Activated naive CD4-positive, alpha-beta T cell treated with anti-CD3 and anti-CD28 coated beads for 36 hours (primary cell): ENCODE measurements at regions of chr19 and their contacts with region 1.

Region 1: GRCh38 chr19:48637170-48637947 is at the start of gene DBP:
- DNase-seq: peak; percentile 98
- H3K4me3 Mint-ChIP-seq: peak within 1 kb of the TSS; percentile 82
- H3K27ac Mint-ChIP-seq: peak within 1 kb of the TSS; percentile 98
- H3K4me1 Mint-ChIP-seq: peaks cover 54% of the 10 kb centered on the region
- H3K27me3 Mint-ChIP-seq: no peaks in the 10 kb centered on the region
- total RNA-seq, gene DBP: 7.8 to 9.7 TPM

Region 2: GRCh38 chr19:48398375-48399235 is 238.8 kb before region 1 on chr19:
- CTCF ChIA-PET with region 1: no interaction called
- intact Hi-C with region 1: loop called (anchors 1 kb)
- DNase-seq: peak; percentile 86
- H3K4me3 Mint-ChIP-seq: peak overlapping the region; percentile 48
- H3K27ac Mint-ChIP-seq: no peak overlapping the region
- H3K4me1 Mint-ChIP-seq: peaks cover 41% of the 10 kb centered on the region
- H3K27me3 Mint-ChIP-seq: peaks cover 41% of the 10 kb centered on the region

Region 3: DNA sequence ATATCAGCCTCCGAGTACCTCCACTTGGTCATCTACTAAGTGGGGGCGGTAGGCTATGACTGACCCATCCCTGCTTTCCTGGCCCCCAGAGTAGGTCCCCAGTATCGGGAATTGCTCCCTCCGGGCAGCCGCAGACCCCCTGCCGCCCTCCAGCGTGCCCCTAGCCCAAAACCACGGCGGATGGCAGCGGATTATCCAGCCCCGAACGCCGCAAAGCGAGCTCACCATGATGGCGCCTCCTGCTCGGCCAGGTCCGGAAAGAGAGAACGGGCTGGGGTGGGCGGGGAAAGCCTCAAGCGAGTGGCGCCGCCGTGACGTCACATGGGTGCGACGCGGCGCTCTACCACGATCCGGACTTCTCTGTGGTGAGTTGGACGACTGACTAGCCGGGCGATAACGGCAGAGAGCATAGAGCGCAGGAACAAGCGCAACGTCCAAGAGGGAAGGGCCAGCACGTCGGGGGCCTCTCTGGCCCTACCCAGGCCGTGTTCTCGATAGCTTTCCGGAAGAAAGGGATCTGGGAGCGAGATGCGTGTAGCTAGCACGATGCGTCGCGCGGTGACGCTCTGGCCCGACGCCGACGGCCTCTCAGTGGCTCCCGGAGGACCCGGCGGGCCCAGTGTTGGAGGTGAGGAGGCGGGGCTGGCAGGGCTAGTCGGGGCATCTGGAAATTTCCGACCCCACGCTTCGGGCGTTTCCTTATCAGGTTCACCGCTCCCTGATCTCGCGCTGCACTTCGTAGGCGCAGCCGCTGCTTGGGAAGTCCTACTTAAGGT is 18.3 kb before region 1 on chr19 and contains the starts of genes RPL18 and SPHK2:
- CTCF ChIA-PET with region 1: no interaction called
- intact Hi-C with region 1: loop called (anchors 1 kb)
- DNase-seq: peak; percentile 95
- H3K4me3 Mint-ChIP-seq: peak within 1 kb of the TSS; percentile 99
- H3K27ac Mint-ChIP-seq: peak within 1 kb of the TSS; percentile 99
- H3K4me1 Mint-ChIP-seq: peaks cover 53% of the 10 kb centered on the region
- H3K27me3 Mint-ChIP-seq: no peaks in the 10 kb centered on the region
- total RNA-seq, gene RPL18: 2,373 to 2,473 TPM
- total RNA-seq, gene SPHK2: 20.1 to 20.6 TPM

Region 4: DNA sequence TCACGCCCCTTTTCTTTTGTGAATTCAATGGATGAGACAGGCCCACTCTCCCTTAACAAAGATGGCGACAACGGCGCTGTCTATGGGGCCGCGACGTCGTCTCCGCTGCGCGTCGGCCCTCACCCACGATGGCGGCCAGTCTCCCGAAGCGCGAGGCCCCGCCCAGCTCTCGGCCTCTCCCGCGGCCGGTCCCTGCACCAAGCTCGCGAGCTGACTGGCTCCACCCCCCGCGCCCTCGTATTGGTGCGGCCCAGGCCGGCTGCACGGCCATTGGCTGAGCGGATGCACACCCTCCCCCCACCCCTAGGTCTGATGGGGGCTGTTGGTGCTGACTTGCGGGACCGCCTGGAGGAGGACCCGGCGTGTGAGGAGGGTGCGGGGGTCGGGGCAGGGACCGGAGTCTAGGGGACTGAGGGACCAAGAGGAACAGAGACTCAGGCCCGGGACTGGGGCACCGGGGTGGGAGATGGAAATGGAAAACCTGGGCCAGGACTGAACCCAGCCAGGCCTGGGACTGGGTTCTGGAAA is 13.2 kb before region 1 on chr19:
- CTCF ChIA-PET with region 1: no interaction called
- intact Hi-C with region 1: loop called (anchors 1 kb)
- DNase-seq: peak; percentile 98
- H3K4me3 Mint-ChIP-seq: peak overlapping the region; percentile 79
- H3K27ac Mint-ChIP-seq: peak overlapping the region; percentile 95
- H3K4me1 Mint-ChIP-seq: peaks cover 50% of the 10 kb centered on the region
- H3K27me3 Mint-ChIP-seq: no peaks in the 10 kb centered on the region

Region 5: GRCh38 chr19:48713864-48714758 is 76.8 kb after region 1 on chr19:
- CTCF ChIA-PET with region 1: no interaction called
- intact Hi-C with region 1: loop called (anchors 2 kb)
- DNase-seq: peak; percentile 99
- H3K4me3 Mint-ChIP-seq: peak overlapping the region; percentile 86
- H3K27ac Mint-ChIP-seq: peak overlapping the region; percentile 58
- H3K4me1 Mint-ChIP-seq: peaks cover 11% of the 10 kb centered on the region
- H3K27me3 Mint-ChIP-seq: no peaks in the 10 kb centered on the region